A549 (cell line): ENCODE measurements at regions of chr5 and their contacts with region 1.

Region 1: DNA sequence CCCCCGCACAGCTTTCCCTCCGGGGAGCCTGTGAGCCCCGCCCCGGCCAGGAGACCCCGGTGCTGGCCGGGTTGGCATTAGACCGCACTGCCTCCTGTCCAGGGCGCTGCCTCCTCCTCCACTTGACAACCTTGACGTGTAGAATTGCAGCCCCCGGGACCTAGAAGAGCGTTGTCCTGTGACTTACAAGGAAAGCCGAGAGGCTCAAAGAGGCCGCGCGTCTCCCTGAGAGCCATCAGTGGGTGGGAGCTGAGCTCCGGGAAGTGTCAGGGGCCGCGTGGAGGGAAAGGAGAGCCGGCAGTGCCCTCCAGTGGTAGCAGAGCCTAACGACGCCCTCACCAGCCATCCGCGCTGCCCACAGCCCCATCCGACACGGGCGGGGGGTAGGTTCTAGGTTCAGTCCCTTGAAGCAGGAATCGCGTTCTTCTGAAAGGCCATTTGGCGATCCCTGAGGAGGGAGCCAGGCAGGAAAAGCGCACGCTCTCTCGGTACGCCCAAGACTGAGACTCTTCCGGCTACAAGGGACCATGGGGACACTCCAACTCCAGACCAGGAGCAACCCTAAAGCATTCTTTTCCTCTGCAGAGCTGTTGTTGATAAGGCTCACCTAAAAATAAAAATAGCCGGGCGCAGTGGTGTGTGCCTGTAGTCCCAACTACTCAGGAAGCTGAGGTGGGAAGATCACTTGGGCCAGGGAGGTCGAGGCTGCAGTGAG is 40.6 kb upstream of the SAP30L start:
- DNase-seq: peak; percentile 69 to 93
- ATAC-seq: peak; percentile 86 to 94
- H3K4me3 ChIP-seq: no peak overlapping the region
- H3K27ac ChIP-seq: peak overlapping the region; percentile 67 to 87
- H3K4me1 ChIP-seq: peaks cover 16% of the 10 kb centered on the region
- CTCF ChIP-seq: peak; percentile 81
- EP300 ChIP-seq: no peak
- POLR2A ChIP-seq: no peak
- RAD21 ChIP-seq: peak; percentile 93 to 97

Region 2: GRCh38 chr5:154072414-154073171 is 332.6 kb before region 1 on chr5:
- CTCF ChIA-PET with region 1: interaction called, 107 read pairs
- POLR2A ChIA-PET with region 1: no interaction called
- DNase-seq: peak; percentile 64 to 84
- ATAC-seq: peak; percentile 98 to 99
- H3K4me3 ChIP-seq: no peak overlapping the region
- H3K27ac ChIP-seq: peak overlapping the region in 1 of 2 experiments; percentile 57; a peak in 3 of 6 replicates
- H3K4me1 ChIP-seq: no peaks in the 10 kb centered on the region
- CTCF ChIP-seq: peak; percentile 97
- EP300 ChIP-seq: no peak
- POLR2A ChIP-seq: no peak
- RAD21 ChIP-seq: peak; percentile 98 to 99

Region 3: DNA sequence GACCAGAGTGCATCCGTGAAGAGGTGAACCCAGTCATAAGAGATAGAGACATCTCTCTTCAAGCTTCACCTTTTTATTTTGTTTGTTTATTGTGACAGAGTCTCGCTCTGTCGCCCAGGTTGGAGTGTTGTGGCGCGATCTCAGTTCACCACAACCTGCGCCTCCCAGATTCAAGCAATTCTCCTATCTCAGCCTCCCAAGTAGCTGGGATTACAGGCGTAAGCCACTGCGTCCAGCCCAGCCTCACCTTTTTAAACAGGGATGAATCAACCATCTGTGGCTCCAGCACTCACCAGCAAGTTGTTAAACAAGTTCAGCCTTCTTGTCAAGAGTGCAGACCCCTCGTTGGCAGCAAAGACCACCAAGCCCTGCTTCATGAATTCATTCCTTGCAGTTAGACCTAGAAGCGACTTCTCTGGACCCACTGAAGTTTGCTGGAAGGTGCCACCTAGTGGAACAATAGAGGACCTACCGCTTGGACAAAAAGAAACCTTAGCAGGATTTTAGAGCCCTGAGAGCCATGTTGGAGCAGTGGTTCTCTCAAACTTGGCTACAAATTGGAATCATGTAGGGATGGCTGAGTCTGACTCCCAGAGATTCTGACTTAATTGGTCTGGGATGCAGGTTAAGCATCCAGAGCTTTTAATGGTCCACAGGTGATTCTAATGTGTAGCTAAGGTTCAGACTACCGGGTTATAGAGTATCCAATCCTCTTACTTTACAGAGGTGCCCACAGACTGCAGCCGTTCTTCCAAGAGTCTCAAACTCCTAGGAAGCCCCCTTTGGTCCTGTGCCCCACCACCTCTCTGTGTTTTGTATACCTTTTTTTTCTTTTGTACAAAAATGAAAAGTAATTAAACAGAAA is 225.2 kb before region 1 on chr5:
- CTCF ChIA-PET with region 1: interaction called, 17 read pairs
- POLR2A ChIA-PET with region 1: no interaction called
- DNase-seq: peak; percentile 69 to 80
- ATAC-seq: peak; percentile 96 to 98
- H3K4me3 ChIP-seq: no peak overlapping the region
- H3K27ac ChIP-seq: no peak overlapping the region
- H3K4me1 ChIP-seq: no peaks in the 10 kb centered on the region
- CTCF ChIP-seq: peak; percentile 76
- EP300 ChIP-seq: no peak
- POLR2A ChIP-seq: no peak
- RAD21 ChIP-seq: peak; percentile 77 to 82

Region 4: DNA sequence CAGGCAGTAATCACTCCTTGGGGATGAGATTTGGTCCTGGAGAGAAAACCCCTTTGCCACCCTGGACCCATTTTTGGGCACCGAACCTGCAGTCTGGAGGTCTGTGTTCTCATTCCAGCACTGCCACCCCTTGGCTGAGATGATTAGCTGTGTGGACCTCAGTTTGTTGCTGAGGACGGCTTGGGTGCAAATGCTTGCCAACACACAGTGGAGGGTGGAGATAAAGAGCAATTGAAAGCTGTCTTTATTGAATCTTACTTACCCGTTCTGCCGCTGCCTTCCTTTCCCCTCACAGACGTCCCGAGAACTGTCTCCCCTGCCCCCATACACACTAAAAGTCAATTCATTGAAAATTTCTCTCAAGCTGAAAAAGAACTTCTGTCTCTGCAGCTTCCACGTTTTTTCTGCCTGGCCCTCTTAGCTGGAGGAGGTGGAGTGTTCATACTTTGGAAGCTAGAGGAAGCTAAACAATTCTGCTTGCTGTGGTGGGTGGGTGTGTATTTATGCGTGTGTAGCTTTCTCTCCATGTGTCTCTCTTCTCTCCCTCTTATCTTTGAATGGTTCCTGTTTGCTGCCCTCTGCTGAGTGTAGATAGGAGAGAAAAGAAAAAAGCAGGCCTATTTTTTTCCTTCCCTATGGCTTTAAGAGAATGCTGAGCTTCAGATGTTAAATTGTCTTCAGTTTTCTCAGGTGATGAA is 208.1 kb before region 1 on chr5:
- CTCF ChIA-PET with region 1: interaction called, 51 read pairs
- POLR2A ChIA-PET with region 1: interaction called, 18 read pairs
- DNase-seq: peak; percentile 35 to 51
- ATAC-seq: peak; percentile 37 to 38; a peak in 3 of 6 replicates
- H3K4me3 ChIP-seq: no peak overlapping the region
- H3K27ac ChIP-seq: peak overlapping the region; percentile 90 to 93
- H3K4me1 ChIP-seq: peaks cover 89% of the 10 kb centered on the region
- CTCF ChIP-seq: peak; percentile 48
- EP300 ChIP-seq: no peak
- POLR2A ChIP-seq: no peak
- RAD21 ChIP-seq: peak; percentile 16 to 42; a peak in 3 of 5 replicates

Region 5: GRCh38 chr5:154324033-154324432 is 81.2 kb before region 1 on chr5:
- CTCF ChIA-PET with region 1: interaction called, 10 read pairs
- POLR2A ChIA-PET with region 1: no interaction called
- DNase-seq: no peak
- ATAC-seq: no peak; a peak in 1 of 6 replicates
- H3K4me3 ChIP-seq: no peak overlapping the region
- H3K27ac ChIP-seq: 0 out of 6 replicates have a peak overlapping the region, but pooled peaks of 1 of the 2 experiments have one; percentile 12
- H3K4me1 ChIP-seq: peaks cover 11% of the 10 kb centered on the region; the same call in 2 of the 3 replicates
- CTCF ChIP-seq: no peak
- EP300 ChIP-seq: no peak
- POLR2A ChIP-seq: no peak
- RAD21 ChIP-seq: no peak

Region 6: GRCh38 chr5:154421868-154422267 is 16.6 kb after region 1 on chr5:
- CTCF ChIA-PET with region 1: interaction called, 30 read pairs
- POLR2A ChIA-PET with region 1: no interaction called
- DNase-seq: peak in 1 of 2 experiments; percentile 37
- ATAC-seq: peak; percentile 66 to 80; a peak in 5 of 6 replicates
- H3K4me3 ChIP-seq: no peak overlapping the region
- H3K27ac ChIP-seq: no peak overlapping the region
- H3K4me1 ChIP-seq: no peaks in the 10 kb centered on the region
- CTCF ChIP-seq: peak; percentile 51
- EP300 ChIP-seq: no peak
- POLR2A ChIP-seq: no peak
- RAD21 ChIP-seq: peak; percentile 48 to 54

Region 7: DNA sequence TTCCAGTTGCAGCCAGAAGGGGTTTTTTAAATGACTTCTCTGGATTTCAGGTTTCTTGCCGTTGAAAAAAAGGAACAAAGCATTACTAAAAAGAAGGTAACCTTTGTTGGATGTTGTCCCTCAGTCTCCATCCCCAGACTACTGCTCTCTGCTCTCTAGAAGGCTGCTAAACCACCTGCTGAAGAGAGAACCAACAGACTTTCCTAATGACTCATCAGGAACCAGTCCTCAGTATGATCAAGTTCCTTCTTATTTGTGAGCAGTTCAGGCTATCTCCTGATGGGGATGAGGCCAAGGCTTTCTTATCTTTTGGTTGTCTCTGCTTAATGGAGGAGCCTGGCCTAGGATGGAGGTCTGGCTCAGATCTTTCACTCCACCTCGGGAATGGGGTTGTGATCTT is 612.4 kb after region 1 on chr5:
- CTCF ChIA-PET with region 1: no interaction called
- POLR2A ChIA-PET with region 1: no interaction called
- DNase-seq: no peak
- ATAC-seq: peak; percentile 35 to 40; a peak in 2 of 6 replicates
- H3K4me3 ChIP-seq: no peak overlapping the region
- H3K27ac ChIP-seq: no peak overlapping the region
- H3K4me1 ChIP-seq: no peaks in the 10 kb centered on the region
- CTCF ChIP-seq: no peak
- EP300 ChIP-seq: no peak
- POLR2A ChIP-seq: no peak
- RAD21 ChIP-seq: no peak